Common myeloid progenitor, CD34-positive (primary cell): ENCODE measurements at regions of chr6 and their contacts with region 1.

Region 1: GRCh38 chr6:135054569-135055498 is at the start of gene HBS1L:
- DNase-seq: peak; percentile 98 to 99 (median 99)
- H3K4me3 ChIP-seq: peak within 1 kb of the TSS; percentile 80 to 95 (median 89)
- H3K27ac ChIP-seq: peak within 1 kb of the TSS; percentile 97
- H3K4me1 ChIP-seq: peaks cover 13 to 28% (median 21%) of the 10 kb centered on the region in 4 experiments
- H3K27me3 ChIP-seq: no peaks in the 10 kb centered on the region

Region 2: DNA sequence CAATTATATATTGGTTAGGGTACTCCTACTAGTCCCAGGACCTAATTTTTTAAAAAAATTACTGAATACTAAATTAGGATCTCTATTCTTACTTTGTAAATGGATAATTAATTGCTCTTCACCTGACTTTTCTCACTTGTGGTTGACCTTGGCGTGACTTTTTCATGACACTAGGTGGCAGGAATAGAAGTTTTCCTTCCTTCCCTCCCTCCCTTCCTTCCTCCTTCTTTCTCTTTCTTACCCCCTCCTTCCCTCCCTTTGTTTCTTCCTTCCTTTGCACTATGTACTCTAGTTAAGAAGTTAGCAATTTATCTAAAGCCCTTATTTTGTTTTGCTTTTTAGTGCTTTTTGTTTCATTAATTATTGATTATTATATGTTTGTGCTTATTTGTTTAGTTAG is 20.2 kb after region 1 on chr6:
- CTCF ChIA-PET with region 1: no interaction called
- POLR2A ChIA-PET with region 1: no interaction called
- DNase-seq: no peak
- H3K4me3 ChIP-seq: no peak overlapping the region
- H3K27ac ChIP-seq: peak overlapping the region in 1 of 2 experiments; percentile 71
- H3K4me1 ChIP-seq: peaks cover 2 to 14% (median 8%) of the 10 kb centered on the region in 4 experiments
- H3K27me3 ChIP-seq: no peaks in the 10 kb centered on the region

Region 3: GRCh38 chr6:135087403-135087802 is 32.6 kb after region 1 on chr6:
- CTCF ChIA-PET with region 1: interaction called, 12 read pairs
- POLR2A ChIA-PET with region 1: interaction called, 4 read pairs
- DNase-seq: peak in 2 of 3 donors; percentile 25 to 42
- H3K4me3 ChIP-seq: peak overlapping the region in 5 of 7 experiments; percentile 1 to 44 (median 32)
- H3K27ac ChIP-seq: peak overlapping the region in 1 of 2 experiments; percentile 62
- H3K4me1 ChIP-seq: peaks cover 12 to 31% (median 22%) of the 10 kb centered on the region in 4 experiments
- H3K27me3 ChIP-seq: no peaks in the 10 kb centered on the region